Sigmoid colon (tissue), 7 donors: ENCODE measurements at regions of chr9 and their contacts with region 1.

Region 1: GRCh38 chr9:137295238-137295811 is 6.7 kb downstream of the NRARP start:
- DNase-seq: no peak
- H3K4me3 ChIP-seq: peak overlapping the region in 3 of 4 donors; percentile 31 to 43 (median 36)
- H3K27ac ChIP-seq: peak overlapping the region in 1 of 4 donors; percentile 59
- H3K4me1 ChIP-seq: peaks cover 0 to 26% (median 22%) of the 10 kb centered on the region in 4 donors
- H3K27me3 ChIP-seq: peaks cover 51 to 88% (median 83%) of the 10 kb centered on the region in 3 donors
- CTCF ChIP-seq: peak in 1 of 4 experiments; percentile 52
- EP300 ChIP-seq: no peak
- POLR2A ChIP-seq: no peak

Region 2: GRCh38 chr9:137406876-137407589 is 111.7 kb after region 1 on chr9:
- intact Hi-C with region 1: loop called (anchors 5 kb)
- DNase-seq: no peak
- H3K4me3 ChIP-seq: peak overlapping the region; percentile 21 to 46 (median 42)
- H3K27ac ChIP-seq: peak overlapping the region; percentile 24 to 52 (median 46)
- H3K4me1 ChIP-seq: peaks cover 0 to 30% (median 28%) of the 10 kb centered on the region in 4 donors
- H3K27me3 ChIP-seq: peaks cover 0 to 5% (median 0%) of the 10 kb centered on the region in 3 donors
- CTCF ChIP-seq: peak; percentile 16 to 67 (median 44)
- EP300 ChIP-seq: no peak
- POLR2A ChIP-seq: no peak

Region 3: GRCh38 chr9:137521405-137521985 is 226.2 kb after region 1 on chr9:
- intact Hi-C with region 1: loop called (anchors 10 kb)
- DNase-seq: no peak
- H3K4me3 ChIP-seq: no peak overlapping the region
- H3K27ac ChIP-seq: no peak overlapping the region
- H3K4me1 ChIP-seq: no peaks in the 10 kb centered on the region
- H3K27me3 ChIP-seq: no peaks in the 10 kb centered on the region
- CTCF ChIP-seq: no peak
- EP300 ChIP-seq: no peak
- POLR2A ChIP-seq: no peak